Pancreas (tissue), 10 donors: ENCODE measurements at regions of chr9 and their contacts with region 1.

Region 1: GRCh38 chr9:82987370-82988189 is 75.4 kb downstream of the RASEF start:
- DNase-seq: no peak
- ATAC-seq: no peak
- H3K4me3 ChIP-seq: no peak overlapping the region
- H3K27ac ChIP-seq: no peak overlapping the region
- H3K4me1 ChIP-seq: no peaks in the 10 kb centered on the region
- H3K27me3 ChIP-seq: no peaks in the 10 kb centered on the region
- CTCF ChIP-seq: no peak

Region 2: GRCh38 chr9:82949203-82949602 is 38.4 kb before region 1 on chr9:
- intact Hi-C with region 1: no loop called
- DNase-seq: no peak
- ATAC-seq: no peak
- H3K4me3 ChIP-seq: no peak overlapping the region
- H3K27ac ChIP-seq: no peak overlapping the region
- H3K4me1 ChIP-seq: no peaks in the 10 kb centered on the region
- H3K27me3 ChIP-seq: no peaks in the 10 kb centered on the region
- CTCF ChIP-seq: no peak

Region 3: GRCh38 chr9:83047973-83048772 is 60.6 kb after region 1 on chr9:
- intact Hi-C with region 1: loop called in 1 of 3 experiments (anchors 10 kb)
- DNase-seq: peak in 4 of 6 donors; percentile 76 to 83 (median 78)
- ATAC-seq: peak; percentile 86 to 94 (median 92)
- H3K4me3 ChIP-seq: no peak overlapping the region
- H3K27ac ChIP-seq: peak overlapping the region in 3 of 4 donors; percentile 12 to 77 (median 59)
- H3K4me1 ChIP-seq: peaks cover 6 to 14% (median 9%) of the 10 kb centered on the region in 3 donors
- H3K27me3 ChIP-seq: no peaks in the 10 kb centered on the region
- CTCF ChIP-seq: no peak